Caco-2 (cell line): ENCODE measurements at regions of chr12 and their contacts with region 1.

Region 1: DNA sequence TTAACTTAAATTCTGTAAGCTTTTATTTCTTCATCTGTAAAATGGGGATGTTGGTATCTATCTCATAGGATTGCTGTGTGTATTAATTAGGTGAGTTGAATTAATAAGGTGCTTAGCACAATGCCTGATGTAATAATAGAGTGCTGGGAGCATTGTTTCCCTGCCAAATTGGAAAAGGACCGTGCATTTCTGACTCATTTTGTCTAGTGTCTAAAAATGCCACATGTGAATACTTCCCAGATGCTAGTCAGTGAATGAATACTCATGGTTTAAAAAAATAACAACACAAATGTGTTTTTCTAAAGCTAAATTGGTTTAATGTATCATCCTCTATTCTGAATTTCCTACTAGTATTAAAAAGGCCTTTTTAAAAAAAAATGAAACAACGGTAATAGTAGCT is 45.4 kb upstream of the NEDD1 start:
- DNase-seq: no peak
- H3K4me3 ChIP-seq: no peak overlapping the region
- H3K4me3 Mint-ChIP-seq: no peak overlapping the region
- H3K27ac Mint-ChIP-seq: peak overlapping the region; percentile 55
- H3K4me1 ChIP-seq: peaks cover 24% of the 10 kb centered on the region
- H3K4me1 Mint-ChIP-seq: peaks cover 24% of the 10 kb centered on the region
- H3K27me3 ChIP-seq: no peaks in the 10 kb centered on the region
- H3K27me3 Mint-ChIP-seq: no peaks in the 10 kb centered on the region
- CTCF ChIP-seq: no peak

Region 2: DNA sequence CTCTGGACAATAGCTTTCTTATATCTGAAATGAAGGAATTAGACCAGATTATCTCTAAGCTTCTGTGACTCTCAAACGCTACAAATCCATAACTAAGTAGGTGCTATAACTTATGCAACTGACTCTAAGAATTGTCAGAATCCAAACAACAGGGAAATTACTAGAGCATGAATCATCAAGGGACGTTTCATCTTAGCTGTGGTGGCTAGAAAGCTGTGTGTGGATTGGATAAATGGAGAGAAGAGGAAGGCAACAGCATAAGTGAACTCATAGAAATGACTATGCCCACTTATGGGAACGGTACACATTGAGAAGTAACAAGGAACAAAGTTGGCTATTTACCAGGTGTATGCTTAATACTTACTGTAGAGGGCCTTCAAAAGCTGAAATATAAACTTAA is 50.6 kb before region 1 on chr12:
- CTCF ChIA-PET with region 1: no interaction called
- POLR2A ChIA-PET with region 1: no interaction called
- intact Hi-C with region 1: loop called (anchors 5 kb)
- DNase-seq: peak in 1 of 2 experiments; percentile 30
- H3K4me3 ChIP-seq: no peak overlapping the region
- H3K4me3 Mint-ChIP-seq: peak overlapping the region; percentile 14
- H3K27ac Mint-ChIP-seq: peak overlapping the region; percentile 88
- H3K4me1 ChIP-seq: peaks cover 24% of the 10 kb centered on the region
- H3K4me1 Mint-ChIP-seq: peaks cover 32% of the 10 kb centered on the region
- H3K27me3 ChIP-seq: no peaks in the 10 kb centered on the region
- H3K27me3 Mint-ChIP-seq: no peaks in the 10 kb centered on the region
- CTCF ChIP-seq: no peak

Region 3: DNA sequence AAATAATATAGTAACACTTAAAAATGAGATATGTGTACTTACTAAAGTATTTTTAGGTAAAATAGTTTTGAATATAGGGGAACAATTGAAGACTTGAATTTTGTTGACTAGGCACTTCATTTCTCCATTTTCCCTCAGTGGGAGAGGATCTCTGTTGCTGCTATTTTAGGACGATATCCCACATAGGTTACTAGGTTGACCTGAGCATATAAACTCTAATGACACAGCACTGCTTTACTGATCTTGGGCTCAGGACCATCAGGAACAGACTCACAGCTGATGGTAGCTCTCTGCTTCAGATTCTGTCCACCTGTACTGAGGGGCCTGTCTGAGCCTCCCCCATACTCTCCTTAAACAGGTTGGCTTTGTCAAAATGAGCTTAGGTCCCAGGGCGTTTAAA is 51.3 kb after region 1 on chr12:
- CTCF ChIA-PET with region 1: no interaction called
- POLR2A ChIA-PET with region 1: no interaction called
- intact Hi-C with region 1: no loop called
- DNase-seq: no peak
- H3K4me3 ChIP-seq: no peak overlapping the region
- H3K4me3 Mint-ChIP-seq: no peak overlapping the region
- H3K27ac Mint-ChIP-seq: no peak overlapping the region
- H3K4me1 ChIP-seq: 0 out of 2 replicates have a peak, but pooled peaks cover 4% of the 10 kb centered on the region
- H3K4me1 Mint-ChIP-seq: peaks cover 14% of the 10 kb centered on the region
- H3K27me3 ChIP-seq: no peaks in the 10 kb centered on the region
- H3K27me3 Mint-ChIP-seq: no peaks in the 10 kb centered on the region
- CTCF ChIP-seq: no peak